AG04450 (cell line): ENCODE measurements at regions of chr15 and their contacts with region 1.

Region 1: DNA sequence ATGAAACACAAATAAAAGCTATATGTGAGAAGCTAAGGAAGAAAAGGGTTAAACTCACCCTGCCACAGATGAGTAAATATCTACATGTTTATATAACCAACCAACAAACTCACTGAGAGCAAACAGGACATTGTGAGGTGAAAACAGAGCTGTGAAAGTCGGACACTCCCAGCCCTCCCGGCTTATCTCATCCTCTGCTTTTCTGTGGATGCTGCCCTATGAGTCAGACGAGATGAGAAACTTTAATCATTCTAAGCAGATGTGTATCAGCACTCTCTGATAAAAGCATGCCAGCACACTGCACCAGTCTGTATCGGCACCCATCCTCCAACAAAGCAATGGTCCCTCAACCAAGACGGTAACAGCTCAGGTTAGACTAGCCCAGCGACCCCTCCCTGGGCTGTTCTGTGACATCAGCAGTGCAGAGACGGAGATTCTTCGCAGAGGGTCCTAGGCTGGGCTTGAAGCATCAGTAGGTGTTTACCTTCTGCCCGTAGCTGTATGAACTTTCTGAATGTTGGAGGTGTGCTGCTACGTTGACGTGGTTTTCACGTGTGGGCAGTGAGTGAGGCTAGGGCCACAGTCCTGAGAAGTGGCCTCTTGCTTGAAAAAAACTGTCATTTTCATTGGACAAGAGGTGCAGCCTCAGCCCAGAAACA is 119.8 kb upstream of the ALDH1A3 start:
- DNase-seq: no peak
- H3K4me3 ChIP-seq: no peak overlapping the region
- H3K27ac ChIP-seq: peak overlapping the region; percentile 25
- H3K27me3 ChIP-seq: no peaks in the 10 kb centered on the region
- CTCF ChIP-seq: no peak

Region 2: GRCh38 chr15:100721770-100722550 is 37.9 kb before region 1 on chr15:
- CTCF ChIA-PET with region 1: no interaction called
- POLR2A ChIA-PET with region 1: interaction called, 13 read pairs
- DNase-seq: peak; percentile 97
- H3K4me3 ChIP-seq: peak overlapping the region; percentile 25; the same call in 1 of the 2 replicates
- H3K27ac ChIP-seq: peak overlapping the region; percentile 98
- H3K27me3 ChIP-seq: no peaks in the 10 kb centered on the region
- CTCF ChIP-seq: no peak